Ovary (tissue), 10 donors: ENCODE measurements at regions of chr13 and their contacts with region 1.

Region 1: DNA sequence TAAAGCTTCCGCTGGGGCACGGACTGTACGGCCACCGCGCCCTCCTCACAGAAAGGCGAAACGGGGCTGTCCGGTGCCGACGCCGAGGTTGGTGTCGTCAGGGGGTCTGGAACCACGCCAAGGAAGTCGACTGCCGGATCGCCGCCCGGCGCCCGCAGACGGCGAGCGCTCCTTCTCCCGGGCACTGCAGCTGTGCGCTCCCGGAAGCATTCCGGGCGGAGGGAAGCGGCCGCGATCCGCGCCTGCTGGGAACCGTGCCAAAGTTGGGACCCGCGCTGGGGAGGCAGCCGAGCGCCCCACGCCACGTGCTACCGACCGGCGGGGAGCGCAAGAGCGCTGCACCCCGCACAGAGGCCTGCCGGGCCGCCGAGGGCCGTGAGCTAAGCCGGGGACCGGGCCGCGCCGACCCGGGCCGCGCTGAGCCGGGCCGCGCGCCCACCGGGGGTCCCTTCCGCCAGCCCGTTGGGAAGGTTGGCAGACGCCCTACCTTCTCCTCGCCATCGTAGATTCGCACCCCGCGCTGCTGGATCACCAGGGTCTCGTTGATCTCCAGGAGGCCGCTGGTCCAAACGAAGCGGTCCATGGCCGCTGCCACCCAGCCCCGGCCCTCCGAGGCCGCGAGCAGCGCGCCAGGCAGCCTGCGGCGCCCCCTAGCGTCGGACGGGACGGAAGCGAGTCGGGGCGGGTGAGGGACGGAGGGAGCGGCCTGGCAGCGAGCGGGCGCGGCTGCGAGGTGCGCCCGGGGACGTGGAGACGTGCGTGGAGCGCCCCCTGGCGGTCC is at the start of gene VPS36:
- DNase-seq: peak; percentile 94 to 98 (median 97)
- H3K4me3 ChIP-seq: peak within 1 kb of the TSS; percentile 94
- H3K27ac ChIP-seq: peak within 1 kb of the TSS; percentile 90 to 92
- H3K4me1 ChIP-seq: peaks cover 10% of the 10 kb centered on the region
- H3K27me3 ChIP-seq: no peaks in the 10 kb centered on the region
- CTCF ChIP-seq: peak; percentile 99 to 100 (median 99)
- EP300 ChIP-seq: no peak
- POLR2A ChIP-seq: peak; percentile 82
- total RNA-seq, gene VPS36: 30.8 to 54.7 (median 34.8) TPM

Region 2: DNA sequence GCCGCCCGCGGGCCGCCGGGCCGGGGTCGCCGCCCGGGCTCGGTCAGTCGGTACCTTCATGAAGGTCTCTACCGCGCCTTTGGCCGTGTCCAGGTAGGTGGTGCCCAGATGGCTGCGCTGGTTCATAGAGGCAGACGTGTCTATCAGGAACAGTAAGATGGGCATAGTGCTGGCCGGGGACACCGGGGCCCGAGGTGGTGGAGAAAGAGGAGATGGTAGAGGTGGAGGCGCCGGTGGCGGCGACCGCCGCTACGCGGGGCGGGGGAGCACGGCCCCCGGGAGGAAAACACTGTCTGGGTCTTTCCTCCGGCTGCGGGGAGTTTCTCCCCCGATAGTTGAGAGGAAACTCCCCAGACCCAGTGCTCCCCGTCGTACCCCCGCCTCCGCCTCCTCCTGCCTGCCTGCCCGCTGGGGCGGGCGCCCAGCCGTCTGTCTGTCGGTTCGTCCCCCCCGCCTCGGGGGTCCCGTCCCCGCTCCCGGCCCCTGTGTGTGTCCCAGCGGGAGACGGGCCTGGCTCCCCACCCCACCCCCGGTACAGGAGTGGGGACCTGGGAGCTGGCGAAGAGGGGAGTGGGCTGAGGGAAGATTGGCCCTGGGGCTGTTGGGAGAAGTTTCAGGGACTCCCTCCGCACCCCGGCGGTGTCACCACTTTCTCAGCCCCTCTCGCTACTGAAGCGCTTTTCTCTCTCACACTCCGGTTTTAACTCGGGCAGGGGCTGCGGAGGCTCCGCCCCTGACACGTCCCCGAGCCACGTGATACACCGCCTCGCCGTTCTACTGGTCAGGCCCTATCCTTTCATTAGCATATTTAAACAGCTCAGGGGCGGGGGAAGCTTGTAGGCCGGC is 997.6 kb before region 1 on chr13 and contains the start of gene INTS6:
- intact Hi-C with region 1: loop called in 1 of 4 experiments (anchors 5 kb)
- DNase-seq: peak; percentile 99 to 100 (median 99)
- H3K4me3 ChIP-seq: peak within 1 kb of the TSS; percentile 79
- H3K27ac ChIP-seq: peak within 1 kb of the TSS; percentile 94 to 100
- H3K4me1 ChIP-seq: no peaks in the 10 kb centered on the region
- H3K27me3 ChIP-seq: no peaks in the 10 kb centered on the region
- CTCF ChIP-seq: no peak
- EP300 ChIP-seq: no peak
- POLR2A ChIP-seq: peak; percentile 97
- total RNA-seq, gene INTS6: 26.7 to 38.9 (median 31.0) TPM

Region 3: DNA sequence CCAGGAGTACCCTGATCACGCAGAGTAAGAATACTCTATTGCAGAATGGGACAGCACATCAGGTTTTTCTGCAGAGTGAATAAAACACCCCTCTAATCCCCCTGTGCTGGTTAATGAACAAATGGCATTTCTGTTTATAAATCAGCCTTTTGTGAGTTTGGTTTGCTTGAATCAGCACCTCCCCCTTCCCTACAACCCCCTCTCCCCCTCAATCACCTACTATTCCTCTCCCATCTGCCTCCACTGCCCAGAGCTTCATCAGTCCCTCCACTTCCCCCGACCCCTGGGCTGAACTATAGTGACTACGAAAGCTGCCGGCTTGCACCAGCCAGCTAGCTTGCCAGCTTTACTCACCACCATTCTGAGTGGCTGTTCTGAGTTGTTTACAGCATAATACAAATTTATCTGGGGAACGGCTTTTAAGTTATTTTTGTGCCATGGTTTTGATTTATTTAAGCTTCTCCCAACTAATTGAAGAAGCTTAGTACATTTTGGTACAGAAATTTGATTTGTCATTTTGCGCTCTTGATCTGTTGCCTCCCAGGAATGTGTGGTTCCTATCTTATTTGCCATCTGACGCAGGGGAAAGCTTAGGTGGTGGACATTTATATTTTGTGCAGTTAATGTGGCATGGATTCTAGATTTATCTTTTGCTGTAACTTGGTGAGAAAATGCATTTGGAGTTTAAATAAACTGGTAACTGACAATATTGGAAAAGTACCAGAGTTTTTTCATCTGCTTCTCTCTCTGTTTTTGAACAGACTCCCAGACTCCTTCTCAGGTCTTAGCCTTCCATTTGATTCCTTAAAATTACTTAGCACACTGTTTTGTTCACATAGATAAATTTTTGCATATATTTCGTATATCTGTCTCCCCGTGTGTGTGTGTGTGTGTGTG is 907.6 kb before region 1 on chr13:
- intact Hi-C with region 1: no loop called
- DNase-seq: no peak
- H3K4me3 ChIP-seq: no peak overlapping the region
- H3K27ac ChIP-seq: no peak overlapping the region
- H3K4me1 ChIP-seq: peaks cover 4% of the 10 kb centered on the region
- H3K27me3 ChIP-seq: no peaks in the 10 kb centered on the region
- CTCF ChIP-seq: no peak
- EP300 ChIP-seq: no peak
- POLR2A ChIP-seq: no peak

Region 4: DNA sequence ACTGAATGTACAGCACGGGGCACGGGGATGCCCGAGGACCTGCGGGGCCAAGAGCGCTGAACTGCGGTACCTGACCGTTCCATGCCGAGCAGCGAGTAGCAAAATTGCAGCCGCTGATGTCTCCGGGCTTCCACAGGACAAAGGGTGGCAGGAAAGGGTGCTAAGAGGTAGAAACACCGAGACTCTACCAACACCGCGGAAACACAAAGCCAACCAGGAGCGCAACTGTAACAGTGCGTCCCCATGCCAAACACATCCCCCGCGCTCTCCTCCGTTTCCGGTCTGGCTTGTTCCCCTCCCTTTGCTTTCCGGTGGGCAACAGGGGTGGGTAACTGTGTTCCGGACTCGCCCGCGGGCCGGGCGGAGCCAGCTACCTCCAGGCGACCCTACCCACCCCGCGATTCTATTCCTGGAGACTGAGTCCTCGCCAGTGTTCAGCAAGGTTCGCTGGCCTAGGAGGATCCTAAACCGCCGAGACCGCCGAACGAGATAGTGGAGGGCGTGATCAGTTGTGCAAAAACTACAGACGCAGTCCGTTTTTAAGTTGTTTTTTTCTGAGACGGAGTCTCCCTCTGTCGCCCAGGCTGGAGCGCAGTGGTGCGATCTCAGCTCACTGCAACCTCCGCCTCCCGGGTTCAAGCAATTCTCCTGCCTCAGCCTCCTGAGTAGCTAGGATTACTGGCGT is 255.9 kb before region 1 on chr13:
- intact Hi-C with region 1: loop called in 1 of 4 experiments (anchors 10 kb)
- DNase-seq: peak; percentile 79 to 89 (median 85)
- H3K4me3 ChIP-seq: peak overlapping the region; percentile 53
- H3K27ac ChIP-seq: peak overlapping the region; percentile 53 to 56
- H3K4me1 ChIP-seq: peaks cover 4% of the 10 kb centered on the region
- H3K27me3 ChIP-seq: no peaks in the 10 kb centered on the region
- CTCF ChIP-seq: peak in 1 of 3 donors; percentile 5
- EP300 ChIP-seq: no peak
- POLR2A ChIP-seq: peak; percentile 41

Region 5: GRCh38 chr13:52348983-52349780 is 101.0 kb before region 1 on chr13:
- intact Hi-C with region 1: loop called in 1 of 4 experiments (anchors 10 kb)
- DNase-seq: no peak
- H3K4me3 ChIP-seq: no peak overlapping the region
- H3K27ac ChIP-seq: no peak overlapping the region
- H3K4me1 ChIP-seq: no peaks in the 10 kb centered on the region
- H3K27me3 ChIP-seq: no peaks in the 10 kb centered on the region
- CTCF ChIP-seq: no peak
- EP300 ChIP-seq: no peak
- POLR2A ChIP-seq: no peak

Region 6: GRCh38 chr13:52383366-52383765 is 66.8 kb before region 1 on chr13:
- intact Hi-C with region 1: no loop called
- DNase-seq: no peak
- H3K4me3 ChIP-seq: no peak overlapping the region
- H3K27ac ChIP-seq: no peak overlapping the region
- H3K4me1 ChIP-seq: no peaks in the 10 kb centered on the region
- H3K27me3 ChIP-seq: no peaks in the 10 kb centered on the region
- CTCF ChIP-seq: no peak
- EP300 ChIP-seq: no peak
- POLR2A ChIP-seq: no peak

Region 7: GRCh38 chr13:52599848-52600603 is 149.8 kb after region 1 on chr13:
- intact Hi-C with region 1: loop called in 1 of 4 experiments (anchors 10 kb)
- DNase-seq: peak; percentile 21 to 70 (median 47)
- H3K4me3 ChIP-seq: peak overlapping the region; percentile 74
- H3K27ac ChIP-seq: peak overlapping the region; percentile 22 to 63
- H3K4me1 ChIP-seq: no peaks in the 10 kb centered on the region
- H3K27me3 ChIP-seq: no peaks in the 10 kb centered on the region
- CTCF ChIP-seq: no peak
- EP300 ChIP-seq: no peak
- POLR2A ChIP-seq: no peak